Activated T-helper 1 cell treated with anti-CD3 and anti-CD28 coated beads, Interleukin-12 subunit alpha, Interleukin-12 subunit beta, Interleukin-2, Interleukin-4 antibody, amounts not matched to agents 30 ng/mL and 10 ng/mL and 1 ng/mL, durations not matched to agents 14 hours and 24 hours and 36 hours (primary cell): ENCODE measurements at regions of chr7 and their contacts with region 1.

Region 1: DNA sequence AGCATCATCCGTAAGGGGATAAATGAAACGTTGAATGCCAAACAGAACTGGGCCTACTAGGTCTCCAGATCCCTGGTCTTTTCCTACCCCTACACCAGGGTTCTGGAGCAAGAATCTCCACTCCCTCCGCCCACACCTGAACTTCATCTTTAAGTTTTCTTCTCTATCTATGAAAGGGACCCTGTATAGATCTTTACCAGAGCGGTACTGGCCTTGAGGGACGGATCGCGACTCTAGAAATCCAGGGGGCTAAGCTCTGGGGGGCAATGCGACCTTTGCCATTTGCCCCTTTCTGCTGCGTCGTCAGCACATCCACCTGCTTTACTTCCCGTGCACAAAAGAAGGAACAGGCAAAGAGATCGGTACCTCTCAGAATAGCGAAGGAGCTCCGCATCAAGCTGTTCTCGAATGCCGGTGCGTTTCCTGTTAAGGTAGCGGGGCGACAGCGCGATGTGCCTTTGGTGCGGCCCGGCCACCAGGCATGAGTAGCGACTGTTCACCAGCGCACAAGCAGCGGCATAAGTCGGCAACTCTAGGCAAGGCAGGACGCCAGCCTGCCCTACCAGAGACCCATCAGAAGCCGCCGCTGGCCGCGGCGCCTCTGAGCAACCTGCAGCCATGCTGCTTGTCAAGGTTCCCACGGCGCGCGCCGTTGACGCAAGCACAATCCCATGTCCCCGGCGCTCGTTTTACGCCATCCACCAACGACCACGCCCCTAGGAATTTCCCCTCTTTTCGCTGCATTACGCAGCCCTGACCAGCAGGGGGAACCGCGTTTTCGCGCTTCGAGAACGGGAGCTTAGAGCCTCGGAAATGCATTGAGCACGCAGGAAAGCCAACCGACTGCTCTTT is at the start of gene POLR1F:
- DNase-seq: peak; percentile 93
- H3K4me3 Mint-ChIP-seq: peak within 1 kb of the TSS; percentile 98
- H3K27ac Mint-ChIP-seq: peak within 1 kb of the TSS; percentile 89
- H3K4me1 Mint-ChIP-seq: peaks cover 40% of the 10 kb centered on the region
- H3K27me3 Mint-ChIP-seq: peaks cover 3% of the 10 kb centered on the region
- total RNA-seq, gene POLR1F: 41.1 and 42.0 TPM in 2 replicates

Region 2: DNA sequence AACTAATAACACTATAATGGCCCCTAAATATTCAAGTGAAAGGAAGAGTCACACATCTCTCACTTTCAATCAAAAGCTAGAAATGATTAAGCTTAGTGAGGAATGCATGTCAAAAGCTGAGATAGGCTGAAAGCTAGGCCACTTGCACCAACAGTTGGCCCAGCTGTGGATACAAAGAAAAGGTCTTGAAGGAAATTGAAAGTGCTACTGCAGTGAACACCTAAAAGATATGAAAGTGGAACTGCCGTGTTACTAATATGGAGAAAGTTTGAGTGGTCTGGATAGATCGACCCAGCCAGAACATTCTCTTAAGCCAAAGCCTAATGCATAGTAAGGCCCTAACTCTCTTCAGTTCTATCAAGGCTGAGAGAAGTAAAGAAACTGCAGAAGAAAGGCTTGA is 1756.2 kb before region 1 on chr7:
- intact Hi-C with region 1: loop called (anchors 5 kb)
- DNase-seq: no peak
- H3K4me3 Mint-ChIP-seq: peak overlapping the region; percentile 31
- H3K27ac Mint-ChIP-seq: no peak overlapping the region
- H3K4me1 Mint-ChIP-seq: peaks cover 17% of the 10 kb centered on the region
- H3K27me3 Mint-ChIP-seq: peaks cover 21% of the 10 kb centered on the region

Region 3: GRCh38 chr7:20330240-20330927 is 621.8 kb after region 1 on chr7 and contains the start of gene ITGB8:
- intact Hi-C with region 1: loop called (anchors 2 kb)
- DNase-seq: peak; percentile 27
- H3K4me3 Mint-ChIP-seq: peak within 1 kb of the TSS; percentile 88
- H3K27ac Mint-ChIP-seq: peak within 1 kb of the TSS; percentile 77
- H3K4me1 Mint-ChIP-seq: peaks cover 26% of the 10 kb centered on the region
- H3K27me3 Mint-ChIP-seq: peaks cover 67% of the 10 kb centered on the region
- total RNA-seq, gene ITGB8: 0.03 TPM in 1 of 2 replicates, not detected in the other